Endothelial cell of umbilical vein (primary cell): ENCODE measurements at regions of chr6 and their contacts with region 1.

Region 1: DNA sequence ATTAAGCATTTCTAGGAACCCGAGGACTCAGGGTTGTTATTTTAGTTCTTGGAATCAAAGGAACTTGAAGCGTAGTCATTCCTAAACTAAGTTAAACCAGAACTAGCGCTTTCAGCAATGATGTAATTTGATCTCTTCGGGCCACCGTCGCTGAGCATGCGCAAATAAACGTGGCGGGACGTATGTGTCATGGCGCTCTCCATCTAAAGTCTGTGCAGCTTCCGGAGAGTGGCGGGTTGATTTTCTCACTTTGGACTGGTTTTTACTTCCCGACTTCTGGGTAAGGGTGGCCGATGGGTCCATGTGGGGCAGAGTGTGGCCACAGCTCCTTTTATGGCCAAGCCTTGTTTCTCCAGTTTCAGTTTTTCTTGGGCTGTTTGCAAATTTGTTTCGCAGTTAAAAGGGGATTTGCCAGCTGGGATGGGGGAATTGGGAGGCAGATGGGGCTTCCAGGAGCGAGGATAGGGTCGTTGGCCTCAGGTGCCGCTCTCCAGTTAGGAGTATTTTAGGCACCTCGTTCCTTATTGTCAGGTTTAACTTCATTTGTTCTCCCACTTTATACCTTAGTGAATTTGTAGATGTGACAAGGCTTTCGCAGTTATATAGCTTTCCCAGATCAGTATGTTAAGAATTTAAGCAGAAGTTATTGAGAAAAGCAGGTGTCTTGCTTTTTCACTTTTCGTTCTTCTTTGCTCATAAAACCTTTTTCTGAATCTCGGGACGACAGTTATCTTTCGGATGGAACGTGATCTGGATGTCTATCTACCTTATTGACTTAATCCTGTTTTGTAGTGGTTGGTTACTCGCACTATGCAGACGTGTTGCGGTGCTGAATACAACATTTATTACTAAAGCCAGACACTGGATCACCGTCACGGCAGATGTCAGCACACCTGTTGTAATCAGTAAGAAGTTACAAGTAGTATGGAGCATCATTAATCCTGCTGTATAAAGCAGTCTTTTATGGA is at the start of gene CDKAL1:
- DNase-seq: peak; percentile 94
- H3K4me3 ChIP-seq: peak within 1 kb of the TSS; percentile 75 to 99 (median 90)
- H3K27ac ChIP-seq: peak within 1 kb of the TSS; percentile 77
- H3K4me1 ChIP-seq: peaks cover 10% of the 10 kb centered on the region
- H3K27me3 ChIP-seq: no peaks in the 10 kb centered on the region
- CTCF ChIP-seq: no peak
- POLR2A ChIP-seq: peak; percentile 89
- total RNA-seq, gene CDKAL1: 17.3 and 20.5 TPM in 2 replicates

Region 2: GRCh38 chr6:20092071-20092566 is 442.5 kb before region 1 on chr6:
- CTCF ChIA-PET with region 1: no interaction called
- POLR2A ChIA-PET with region 1: no interaction called
- dilution Hi-C with region 1: no loop called
- intact Hi-C with region 1: loop called (anchors 1 kb)
- DNase-seq: peak; percentile 65
- H3K4me3 ChIP-seq: no peak overlapping the region
- H3K27ac ChIP-seq: no peak overlapping the region
- H3K4me1 ChIP-seq: no peaks in the 10 kb centered on the region
- H3K27me3 ChIP-seq: no peaks in the 10 kb centered on the region
- CTCF ChIP-seq: peak; percentile 29 to 44
- POLR2A ChIP-seq: no peak

Region 3: GRCh38 chr6:20919677-20920385 is 385.3 kb after region 1 on chr6:
- CTCF ChIA-PET with region 1: no interaction called
- POLR2A ChIA-PET with region 1: no interaction called
- dilution Hi-C with region 1: no loop called
- intact Hi-C with region 1: no loop called
- DNase-seq: peak; percentile 35
- H3K4me3 ChIP-seq: no peak overlapping the region
- H3K27ac ChIP-seq: no peak overlapping the region
- H3K4me1 ChIP-seq: peaks cover 6% of the 10 kb centered on the region
- H3K27me3 ChIP-seq: no peaks in the 10 kb centered on the region
- CTCF ChIP-seq: no peak
- POLR2A ChIP-seq: no peak